Activated T-helper 2 cell treated with anti-CD3 and anti-CD28 coated beads, Interferon-gamma antibody, Interleukin-2, Interleukin-4, amounts not matched to agents 10 μg/mL and 5 μg/mL and 100 μg/mL, durations not matched to agents 14 hours and 24 hours and 36 hours (primary cell): ENCODE measurements at regions of chr10 and their contacts with region 1.

Region 1: DNA sequence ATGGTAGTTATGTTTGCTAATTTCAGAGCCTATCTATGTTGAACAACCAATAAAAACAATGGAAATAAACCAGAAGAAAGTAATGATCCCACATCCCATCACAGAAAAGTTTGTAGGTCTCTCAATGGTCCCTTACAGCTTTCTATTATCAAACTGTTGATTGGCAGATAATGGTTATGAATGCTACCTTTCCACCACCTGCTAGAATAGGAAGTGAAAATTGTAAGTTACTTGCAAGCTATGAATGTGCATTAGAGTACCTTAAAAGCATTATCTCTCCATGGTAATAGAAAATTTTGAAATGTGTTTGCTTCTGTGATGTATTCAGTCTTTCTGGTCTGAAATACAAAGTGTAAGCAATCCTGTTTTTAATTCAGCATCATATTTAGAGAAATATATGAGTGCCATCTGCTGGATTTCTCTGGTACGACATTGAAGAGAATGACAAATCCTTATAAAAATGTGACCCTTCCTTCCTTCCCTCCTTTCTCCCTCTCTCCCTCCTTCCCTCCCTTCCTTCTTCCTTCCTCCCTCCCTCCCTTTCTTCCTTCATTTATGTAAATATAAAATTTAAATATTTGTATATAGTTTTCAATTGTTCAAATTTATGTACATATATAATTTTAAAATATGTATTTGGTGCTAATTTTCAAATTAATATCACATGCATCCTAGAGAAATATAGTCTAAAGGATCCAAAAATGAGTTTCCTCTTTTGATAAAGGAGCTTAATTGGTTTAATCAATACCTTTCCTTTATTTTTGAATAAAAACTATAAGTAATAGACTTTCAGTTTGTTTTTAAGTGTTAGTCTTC is 41.4 kb upstream of the PNLIPRP3 start:
- DNase-seq: no peak
- H3K4me3 Mint-ChIP-seq: no peak overlapping the region
- H3K27ac Mint-ChIP-seq: no peak overlapping the region
- H3K4me1 Mint-ChIP-seq: no peaks in the 10 kb centered on the region
- H3K27me3 Mint-ChIP-seq: no peaks in the 10 kb centered on the region

Region 2: DNA sequence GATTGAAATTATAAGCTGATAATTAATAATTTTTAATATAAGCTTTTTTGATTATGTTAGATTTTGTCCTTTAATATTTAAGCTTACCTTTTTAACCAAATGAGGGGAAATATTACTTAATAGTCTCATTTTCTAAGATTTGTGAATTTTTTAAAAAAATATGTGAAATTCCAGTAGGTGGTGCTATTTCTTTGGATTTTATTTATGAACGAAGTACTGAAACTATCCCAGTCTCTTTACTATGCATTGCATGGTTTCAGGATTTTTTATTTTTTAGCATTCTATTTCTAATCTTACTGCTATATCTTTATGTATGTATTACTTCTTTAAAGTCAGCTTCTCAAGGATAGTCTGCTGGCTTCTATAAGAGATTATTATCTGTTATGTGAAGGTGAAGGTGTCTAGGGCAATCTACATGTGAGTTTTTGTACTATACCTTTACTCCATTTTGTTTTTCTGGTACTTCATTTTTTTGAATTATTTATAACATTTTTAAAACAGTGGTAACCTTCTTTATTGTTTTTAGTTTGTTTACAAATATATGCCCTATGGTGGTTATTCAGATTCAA is 1214.7 kb before region 1 on chr10:
- intact Hi-C with region 1: loop called (anchors 10 kb)
- DNase-seq: no peak
- H3K4me3 Mint-ChIP-seq: no peak overlapping the region
- H3K27ac Mint-ChIP-seq: no peak overlapping the region
- H3K4me1 Mint-ChIP-seq: no peaks in the 10 kb centered on the region
- H3K27me3 Mint-ChIP-seq: peaks cover under 1% of the 10 kb centered on the region

Region 3: GRCh38 chr10:115355162-115355760 is 1030.9 kb before region 1 on chr10:
- intact Hi-C with region 1: loop called (anchors 5 kb)
- DNase-seq: no peak
- H3K4me3 Mint-ChIP-seq: no peak overlapping the region
- H3K27ac Mint-ChIP-seq: no peak overlapping the region
- H3K4me1 Mint-ChIP-seq: no peaks in the 10 kb centered on the region
- H3K27me3 Mint-ChIP-seq: no peaks in the 10 kb centered on the region

Region 4: GRCh38 chr10:115706026-115706781 is 680.0 kb before region 1 on chr10:
- intact Hi-C with region 1: loop called (anchors 2 kb)
- DNase-seq: no peak
- H3K4me3 Mint-ChIP-seq: no peak overlapping the region
- H3K27ac Mint-ChIP-seq: no peak overlapping the region
- H3K4me1 Mint-ChIP-seq: no peaks in the 10 kb centered on the region
- H3K27me3 Mint-ChIP-seq: no peaks in the 10 kb centered on the region

Region 5: GRCh38 chr10:115790220-115790619 is 596.0 kb before region 1 on chr10:
- intact Hi-C with region 1: loop called (anchors 10 kb)
- DNase-seq: no peak
- H3K4me3 Mint-ChIP-seq: no peak overlapping the region
- H3K27ac Mint-ChIP-seq: no peak overlapping the region
- H3K4me1 Mint-ChIP-seq: no peaks in the 10 kb centered on the region
- H3K27me3 Mint-ChIP-seq: no peaks in the 10 kb centered on the region

Region 6: DNA sequence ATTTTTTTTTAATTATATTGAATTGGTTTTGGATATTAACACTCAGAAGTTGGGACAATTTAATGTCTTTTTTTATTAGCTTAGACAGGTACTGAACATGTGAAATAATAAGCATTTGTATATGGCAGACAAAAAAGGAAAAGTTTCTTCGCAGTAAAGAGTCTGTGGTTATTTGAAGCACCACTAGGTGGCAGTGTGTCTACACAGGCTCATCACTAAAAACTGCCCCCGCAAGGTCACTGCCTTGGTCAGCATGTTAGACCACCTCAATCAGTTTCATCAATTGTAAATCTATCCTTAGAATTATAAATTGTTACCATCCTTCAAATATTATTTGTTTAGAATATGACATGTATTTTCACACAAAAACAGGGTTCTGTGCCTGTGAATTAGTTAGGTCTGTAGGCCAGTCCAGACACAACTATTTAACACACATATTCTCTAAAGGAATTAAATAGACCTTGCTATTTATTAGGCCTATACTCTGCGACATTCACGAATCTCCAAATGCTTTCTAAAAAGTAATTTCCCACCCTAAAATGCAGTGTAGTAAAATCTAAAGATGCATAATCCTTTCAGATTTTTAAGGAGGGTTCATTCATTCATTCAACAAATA is 58.4 kb after region 1 on chr10:
- intact Hi-C with region 1: no loop called
- DNase-seq: no peak
- H3K4me3 Mint-ChIP-seq: no peak overlapping the region
- H3K27ac Mint-ChIP-seq: no peak overlapping the region
- H3K4me1 Mint-ChIP-seq: no peaks in the 10 kb centered on the region
- H3K27me3 Mint-ChIP-seq: no peaks in the 10 kb centered on the region

Region 7: GRCh38 chr10:116748041-116748440 is 361.8 kb after region 1 on chr10:
- intact Hi-C with region 1: no loop called
- DNase-seq: no peak
- H3K4me3 Mint-ChIP-seq: no peak overlapping the region
- H3K27ac Mint-ChIP-seq: no peak overlapping the region
- H3K4me1 Mint-ChIP-seq: peaks cover 2% of the 10 kb centered on the region
- H3K27me3 Mint-ChIP-seq: peaks cover 31% of the 10 kb centered on the region